Calu3 (cell line): ENCODE measurements at regions of chr14 and their contacts with region 1.

Region 1: GRCh38 chr14:36805131-36805559 is 143.5 kb downstream of the PAX9 start:
- DNase-seq: no peak
- H3K4me3 Mint-ChIP-seq: no peak overlapping the region
- H3K27ac Mint-ChIP-seq: no peak overlapping the region
- H3K4me1 Mint-ChIP-seq: no peaks in the 10 kb centered on the region
- H3K27me3 Mint-ChIP-seq: no peaks in the 10 kb centered on the region
- CTCF ChIP-seq: no peak

Region 2: DNA sequence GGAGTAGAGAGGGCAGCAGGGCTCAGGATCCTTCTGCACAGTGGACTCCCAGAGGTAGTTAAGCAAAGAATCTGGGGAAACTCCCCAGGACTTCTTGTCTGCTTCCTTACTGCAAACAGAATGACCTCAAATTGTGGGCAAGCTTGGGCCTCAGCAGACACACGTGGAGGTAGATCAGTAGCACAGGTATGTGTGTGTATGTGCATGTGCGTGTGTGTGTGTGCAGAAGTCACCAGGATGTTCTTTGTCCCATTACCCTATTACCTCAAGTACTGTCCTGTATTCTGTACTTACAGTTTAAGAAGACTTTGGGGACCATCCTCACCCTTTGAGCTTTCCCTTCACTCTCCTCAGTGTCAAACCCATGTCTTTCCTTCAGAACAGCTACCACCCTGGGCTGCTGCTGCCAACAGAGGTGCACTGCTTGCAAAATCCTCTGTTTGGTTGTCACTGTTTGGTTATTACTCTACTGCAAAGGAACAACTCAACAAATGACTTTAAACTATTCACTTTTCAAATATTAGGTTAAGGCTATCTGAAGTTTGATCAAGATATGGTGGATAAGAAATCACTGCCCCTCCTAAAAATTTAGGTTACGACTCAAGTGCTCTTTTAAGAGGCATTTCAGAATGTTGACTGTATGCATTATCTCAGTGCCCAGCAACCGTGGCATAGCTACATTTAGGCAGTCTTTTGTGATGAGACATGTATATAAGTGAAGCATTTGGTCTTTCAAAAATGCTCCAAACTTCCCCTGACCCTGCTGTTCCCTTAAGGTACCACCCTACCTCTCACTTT is 406.5 kb before region 1 on chr14:
- CTCF ChIA-PET with region 1: no interaction called
- intact Hi-C with region 1: loop called (anchors 5 kb)
- DNase-seq: no peak
- H3K4me3 Mint-ChIP-seq: no peak overlapping the region
- H3K27ac Mint-ChIP-seq: no peak overlapping the region
- H3K4me1 Mint-ChIP-seq: no peaks in the 10 kb centered on the region
- H3K27me3 Mint-ChIP-seq: peaks cover 41% of the 10 kb centered on the region
- CTCF ChIP-seq: no peak